ENCODE measurements at regions of chr12 and their contacts with region 1.

Region 1: DNA sequence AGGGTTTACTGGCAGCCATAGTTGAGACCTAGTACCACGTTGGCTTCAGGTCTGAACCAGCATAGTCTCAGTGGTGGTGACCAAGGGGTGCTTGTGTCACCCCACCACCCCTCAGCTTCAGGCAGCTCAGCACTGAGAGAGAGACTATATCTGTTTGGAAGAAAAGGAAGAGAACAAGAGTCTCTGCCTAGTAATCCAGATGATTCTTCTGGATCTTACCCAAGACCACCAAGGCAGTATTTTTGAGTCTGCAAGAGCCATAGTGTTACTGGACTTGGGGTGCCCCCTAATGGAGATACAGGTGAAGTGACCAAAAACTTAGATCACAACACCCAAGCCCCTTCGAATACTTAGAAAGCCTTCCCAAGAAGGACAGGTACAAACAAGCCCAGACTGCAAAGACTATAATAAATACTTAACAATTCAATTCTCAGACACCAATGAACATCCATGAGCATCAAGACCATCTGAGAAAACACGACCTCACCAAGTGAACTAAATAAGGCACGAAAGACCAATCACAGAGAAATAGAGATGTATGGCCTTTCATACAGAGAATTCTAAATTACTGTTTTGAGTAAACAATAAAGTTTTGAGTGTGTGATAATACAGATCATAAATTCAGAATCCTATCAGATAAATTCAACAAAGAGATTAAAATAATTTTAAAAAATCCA is 107.0 kb downstream of the HELB start:
- DNase-seq: peak; percentile 21
- ATAC-seq: peak; percentile 26 to 47

Region 2: GRCh38 chr12:66210840-66211239 is 198.5 kb before region 1 on chr12:
- intact Hi-C with region 1: no loop called
- DNase-seq: no peak
- ATAC-seq: peak in 1 of 2 donors; percentile 52

Region 3: DNA sequence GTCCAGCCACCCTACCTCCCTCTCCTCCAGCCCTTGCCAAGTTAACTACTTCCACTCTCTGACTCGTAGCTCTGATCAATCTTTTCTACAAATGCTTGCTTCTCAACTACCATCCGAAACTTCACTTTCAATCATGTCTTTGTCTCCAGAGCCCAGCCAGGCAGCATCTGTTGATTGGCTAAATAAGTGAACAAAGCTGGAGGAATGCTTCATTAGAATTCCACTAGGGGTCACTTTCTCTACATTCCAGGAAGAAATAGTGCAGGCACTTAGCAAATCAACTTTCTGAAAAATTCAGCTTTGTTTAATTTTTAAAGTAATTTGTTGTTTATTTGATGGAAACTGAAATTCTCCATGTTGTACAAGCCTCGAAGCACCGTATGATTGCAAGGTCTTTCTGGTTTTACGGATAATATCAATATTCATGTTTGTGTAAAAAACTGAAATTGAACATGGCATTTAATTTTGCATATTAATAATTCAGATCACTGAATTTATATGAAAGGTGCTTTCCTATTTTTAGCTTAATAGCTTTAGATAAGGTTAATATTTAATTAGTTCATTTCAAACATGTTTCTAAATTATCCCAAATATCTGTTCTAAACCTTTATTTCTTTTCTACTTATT is 139.5 kb before region 1 on chr12:
- intact Hi-C with region 1: loop called (anchors 5 to 10 kb)
- DNase-seq: no peak
- ATAC-seq: peak; percentile 53 to 60

Region 4: DNA sequence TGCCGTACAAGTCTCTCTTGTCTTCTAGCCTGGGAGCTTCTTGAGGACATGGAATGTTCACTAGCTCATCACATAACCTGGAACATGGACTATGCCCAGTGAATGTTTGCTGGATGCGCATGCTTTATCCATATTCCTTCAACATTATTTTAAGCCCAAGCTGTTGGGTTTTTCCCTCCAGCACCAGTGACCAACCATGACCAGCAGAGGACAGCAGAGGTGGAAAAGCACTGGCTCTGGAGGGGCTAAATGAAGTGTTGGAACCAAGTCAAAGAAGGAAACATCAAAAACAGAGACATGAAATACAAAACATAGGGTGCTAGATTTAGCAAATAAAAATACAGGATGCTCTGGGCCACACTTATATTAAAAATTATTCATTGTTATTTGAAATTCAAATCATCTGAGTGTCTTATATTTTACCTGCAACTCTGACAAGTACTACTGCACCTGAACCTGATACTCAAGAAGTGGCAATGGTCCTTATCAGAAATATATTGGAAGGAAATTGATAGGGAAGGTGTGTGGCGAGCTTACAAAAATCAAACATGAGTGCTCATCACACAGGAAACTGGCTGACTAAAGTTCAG is 130.1 kb before region 1 on chr12:
- intact Hi-C with region 1: loop called (anchors 5 to 10 kb)
- DNase-seq: no peak
- ATAC-seq: peak; percentile 36 to 50

Region 5: GRCh38 chr12:66449531-66449930 is 40.2 kb after region 1 on chr12:
- intact Hi-C with region 1: no loop called
- DNase-seq: no peak
- ATAC-seq: no peak